Panc1 (cell line): ENCODE measurements at regions of chr5 and their contacts with region 1.

Region 1: GRCh38 chr5:37005946-37006540 is 129.5 kb downstream of the NIPBL start:
- DNase-seq: no peak
- ATAC-seq: peak; percentile 73
- H3K4me3 ChIP-seq: no peak overlapping the region
- H3K27ac ChIP-seq: no peak overlapping the region
- H3K4me1 ChIP-seq: peaks cover 9% of the 10 kb centered on the region
- H3K27me3 ChIP-seq: no peaks in the 10 kb centered on the region
- CTCF ChIP-seq: peak; percentile 64; the same call in 1 of the 2 replicates

Region 2: DNA sequence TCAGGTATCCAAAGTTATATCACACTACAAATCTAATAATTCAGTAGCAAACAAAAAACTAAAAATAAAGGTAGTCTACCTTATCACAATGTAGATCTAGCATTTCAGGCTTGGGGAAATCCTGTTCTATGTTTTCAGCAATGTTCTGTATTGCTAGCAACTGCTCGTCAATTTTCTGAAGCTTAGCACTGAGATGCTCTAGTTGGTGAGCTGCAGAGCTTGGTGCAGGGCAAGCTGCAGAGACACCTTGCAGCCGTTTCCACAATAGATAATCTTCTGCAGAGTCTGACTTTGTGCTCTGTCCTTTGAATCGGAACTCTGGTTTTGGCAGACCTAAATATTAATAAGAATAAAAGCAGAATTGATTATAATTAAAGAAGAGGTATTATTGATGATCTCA is 147.6 kb after region 1 on chr5:
- CTCF ChIA-PET with region 1: interaction called, 10 read pairs
- POLR2A ChIA-PET with region 1: no interaction called
- in situ Hi-C with region 1: no loop called
- intact Hi-C with region 1: no loop called
- DNase-seq: no peak
- ATAC-seq: no peak
- H3K4me3 ChIP-seq: no peak overlapping the region
- H3K27ac ChIP-seq: no peak overlapping the region
- H3K4me1 ChIP-seq: no peaks in the 10 kb centered on the region
- H3K27me3 ChIP-seq: no peaks in the 10 kb centered on the region
- CTCF ChIP-seq: no peak

Region 3: GRCh38 chr5:37319037-37319782 is 313.2 kb after region 1 on chr5:
- CTCF ChIA-PET with region 1: no interaction called
- POLR2A ChIA-PET with region 1: no interaction called
- in situ Hi-C with region 1: no loop called
- intact Hi-C with region 1: no loop called
- DNase-seq: no peak
- ATAC-seq: no peak
- H3K4me3 ChIP-seq: no peak overlapping the region
- H3K27ac ChIP-seq: no peak overlapping the region
- H3K4me1 ChIP-seq: no peaks in the 10 kb centered on the region
- H3K27me3 ChIP-seq: no peaks in the 10 kb centered on the region
- CTCF ChIP-seq: no peak

Region 4: DNA sequence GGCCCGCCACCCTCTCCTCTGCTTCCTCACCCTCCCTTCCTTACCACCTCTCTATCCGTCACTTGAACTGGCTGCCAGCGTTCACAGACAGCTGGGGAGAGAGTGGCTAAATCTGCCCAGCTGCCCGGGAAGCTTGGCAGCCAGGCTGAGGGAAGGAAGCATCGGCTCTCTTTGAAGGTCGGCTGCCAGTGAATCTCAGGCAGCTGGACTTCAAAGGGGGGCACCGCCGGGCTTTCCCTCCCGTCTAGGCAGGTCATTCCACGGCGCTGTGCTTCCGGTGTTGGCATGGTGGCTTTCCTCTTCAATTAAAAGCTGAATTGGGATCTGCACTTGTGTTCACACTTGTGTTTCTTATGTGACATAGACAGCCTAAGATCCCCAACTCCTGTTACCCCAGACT is 659.8 kb after region 1 on chr5:
- CTCF ChIA-PET with region 1: no interaction called
- POLR2A ChIA-PET with region 1: no interaction called
- in situ Hi-C with region 1: no loop called
- intact Hi-C with region 1: no loop called
- DNase-seq: no peak
- ATAC-seq: no peak
- H3K4me3 ChIP-seq: no peak overlapping the region
- H3K27ac ChIP-seq: peak overlapping the region; percentile 63; the same call in 1 of the 2 replicates
- H3K4me1 ChIP-seq: peaks cover 19% of the 10 kb centered on the region
- H3K27me3 ChIP-seq: no peaks in the 10 kb centered on the region
- CTCF ChIP-seq: no peak